Tibial artery (tissue), 4 donors: ENCODE measurements at regions of chr1 and their contacts with region 1.

Region 1: GRCh38 chr1:117257291-117257690 is 46.6 kb upstream of the VTCN1 start:
- DNase-seq: no peak
- H3K4me3 ChIP-seq: no peak overlapping the region
- H3K27ac ChIP-seq: no peak overlapping the region
- H3K4me1 ChIP-seq: no peaks in the 10 kb centered on the region
- H3K27me3 ChIP-seq: no peaks in the 10 kb centered on the region
- CTCF ChIP-seq: no peak

Region 2: GRCh38 chr1:117308311-117308916 is 51.1 kb after region 1 on chr1:
- intact Hi-C with region 1: loop called (anchors 5 kb)
- DNase-seq: no peak
- H3K4me3 ChIP-seq: no peak overlapping the region
- H3K27ac ChIP-seq: no peak overlapping the region
- H3K4me1 ChIP-seq: no peaks in the 10 kb centered on the region
- H3K27me3 ChIP-seq: no peaks in the 10 kb centered on the region
- CTCF ChIP-seq: no peak